ENCODE measurements at regions of chr2 and their contacts with region 1.

Region 1: GRCh38 chr2:218395797-218396687 is 3.6 kb upstream of the CTDSP1 start:
- DNase-seq: peak; percentile 88
- ATAC-seq: peak; percentile 70
- H3K4me3 Mint-ChIP-seq: peak overlapping the region; percentile 92
- H3K27ac Mint-ChIP-seq: peak overlapping the region; percentile 96
- H3K4me1 Mint-ChIP-seq: peaks cover 51% of the 10 kb centered on the region
- H3K27me3 Mint-ChIP-seq: no peaks in the 10 kb centered on the region
- CTCF ChIP-seq: peak; percentile 44

Region 2: GRCh38 chr2:217489145-217489960 is 906.7 kb before region 1 on chr2:
- CTCF ChIA-PET with region 1: no interaction called
- POLR2A ChIA-PET with region 1: no interaction called
- intact Hi-C with region 1: no loop called
- DNase-seq: no peak
- ATAC-seq: no peak
- H3K4me3 Mint-ChIP-seq: no peak overlapping the region
- H3K27ac Mint-ChIP-seq: no peak overlapping the region
- H3K4me1 Mint-ChIP-seq: no peaks in the 10 kb centered on the region
- H3K27me3 Mint-ChIP-seq: peaks cover 4% of the 10 kb centered on the region
- CTCF ChIP-seq: no peak

Region 3: DNA sequence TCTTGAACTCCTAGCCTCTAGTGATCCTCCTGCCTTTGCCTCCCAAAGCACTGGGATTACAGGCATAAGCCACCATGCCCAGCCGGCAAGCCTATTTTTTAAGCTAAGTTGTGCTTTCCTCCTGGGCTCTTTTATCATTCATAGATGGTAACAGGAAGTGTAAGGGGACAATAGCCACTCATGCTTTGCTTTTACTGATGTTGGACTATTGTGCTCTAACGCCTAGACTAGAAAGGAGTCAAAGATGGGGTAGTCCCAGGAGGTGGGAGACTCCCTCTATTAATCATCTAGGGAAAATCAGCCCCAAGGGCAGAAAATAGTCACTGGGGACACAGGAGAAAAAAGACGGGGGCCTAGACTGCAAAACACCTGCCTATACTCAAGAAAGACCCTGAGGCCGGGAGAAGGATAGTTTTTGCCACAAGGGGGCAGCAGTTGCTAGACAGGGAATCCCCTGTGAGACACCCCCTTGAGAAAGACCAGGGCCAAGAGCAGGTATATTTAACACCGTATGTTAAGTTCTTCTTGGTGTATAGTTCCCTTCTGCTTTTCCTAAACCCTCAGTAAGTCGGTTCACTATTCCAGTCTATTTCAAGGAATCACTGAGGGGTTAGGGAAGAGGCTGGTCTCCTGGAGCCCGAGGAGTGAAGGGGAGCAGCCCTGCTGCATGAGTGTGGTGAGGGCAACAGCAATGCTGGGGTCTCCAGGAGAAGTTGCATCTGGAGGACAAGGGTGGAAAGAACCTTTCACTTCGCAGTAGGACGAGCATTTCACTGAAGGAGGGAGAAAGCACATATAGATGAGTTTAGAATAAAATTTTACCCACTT is 227.2 kb before region 1 on chr2:
- CTCF ChIA-PET with region 1: no interaction called
- POLR2A ChIA-PET with region 1: no interaction called
- intact Hi-C with region 1: loop called (anchors 5 kb)
- DNase-seq: peak; percentile 41
- ATAC-seq: peak; percentile 79
- H3K4me3 Mint-ChIP-seq: no peak overlapping the region
- H3K27ac Mint-ChIP-seq: no peak overlapping the region
- H3K4me1 Mint-ChIP-seq: peaks cover 25% of the 10 kb centered on the region
- H3K27me3 Mint-ChIP-seq: peaks cover 18% of the 10 kb centered on the region
- CTCF ChIP-seq: peak; percentile 30

Region 4: GRCh38 chr2:218257390-218257981 is 138.6 kb before region 1 on chr2:
- CTCF ChIA-PET with region 1: no interaction called
- POLR2A ChIA-PET with region 1: interaction called, 4 read pairs
- intact Hi-C with region 1: loop called (anchors 1 kb)
- DNase-seq: peak; percentile 67
- ATAC-seq: peak; percentile 89
- H3K4me3 Mint-ChIP-seq: peak overlapping the region; percentile 73
- H3K27ac Mint-ChIP-seq: peak overlapping the region; percentile 92
- H3K4me1 Mint-ChIP-seq: peaks cover 70% of the 10 kb centered on the region
- H3K27me3 Mint-ChIP-seq: no peaks in the 10 kb centered on the region
- CTCF ChIP-seq: no peak

Region 5: GRCh38 chr2:218292048-218293014 is 103.7 kb before region 1 on chr2 and contains the start of gene TMBIM1:
- CTCF ChIA-PET with region 1: interaction called, 12 read pairs
- POLR2A ChIA-PET with region 1: interaction called, 16 read pairs
- intact Hi-C with region 1: loop called (anchors 1 kb)
- DNase-seq: peak; percentile 89
- ATAC-seq: peak; percentile 80
- H3K4me3 Mint-ChIP-seq: peak within 1 kb of the TSS; percentile 83
- H3K27ac Mint-ChIP-seq: peak within 1 kb of the TSS; percentile 92
- H3K4me1 Mint-ChIP-seq: peaks cover 73% of the 10 kb centered on the region
- H3K27me3 Mint-ChIP-seq: no peaks in the 10 kb centered on the region
- CTCF ChIP-seq: peak; percentile 40
- total RNA-seq, gene TMBIM1: 40.7 and 45.0 TPM in 2 replicates

Region 6: GRCh38 chr2:218360447-218360846 is 35.6 kb before region 1 on chr2:
- CTCF ChIA-PET with region 1: interaction called, 7 read pairs
- POLR2A ChIA-PET with region 1: no interaction called
- intact Hi-C with region 1: loop called (anchors 1 kb)
- DNase-seq: no peak
- ATAC-seq: no peak
- H3K4me3 Mint-ChIP-seq: no peak overlapping the region
- H3K27ac Mint-ChIP-seq: peak overlapping the region; percentile 25
- H3K4me1 Mint-ChIP-seq: peaks cover 11% of the 10 kb centered on the region
- H3K27me3 Mint-ChIP-seq: no peaks in the 10 kb centered on the region
- CTCF ChIP-seq: no peak

Region 7: DNA sequence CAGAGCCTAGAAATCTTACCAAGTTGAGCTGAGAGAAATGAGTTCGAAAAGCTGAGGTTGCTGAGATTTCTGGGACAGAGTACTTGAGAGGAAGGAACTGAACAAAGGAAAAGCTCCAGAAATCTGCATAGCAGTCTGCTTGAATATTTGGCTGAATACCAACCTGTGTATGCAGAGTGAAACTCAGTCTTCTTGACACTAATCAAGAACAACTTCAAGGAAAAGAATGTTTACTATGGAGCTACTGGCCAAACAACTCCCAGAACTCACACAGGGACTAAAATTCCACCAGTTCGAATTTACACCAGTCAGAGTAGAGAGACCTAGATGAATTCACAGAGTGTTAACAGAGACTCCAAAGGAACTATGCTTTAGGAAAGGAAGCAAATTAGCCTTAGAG is 105.6 kb after region 1 on chr2:
- CTCF ChIA-PET with region 1: no interaction called
- POLR2A ChIA-PET with region 1: no interaction called
- intact Hi-C with region 1: no loop called
- DNase-seq: no peak
- ATAC-seq: no peak
- H3K4me3 Mint-ChIP-seq: no peak overlapping the region
- H3K27ac Mint-ChIP-seq: no peak overlapping the region
- H3K4me1 Mint-ChIP-seq: peaks cover 4% of the 10 kb centered on the region
- H3K27me3 Mint-ChIP-seq: no peaks in the 10 kb centered on the region
- CTCF ChIP-seq: no peak

Region 8: GRCh38 chr2:218523651-218524050 is 127.6 kb after region 1 on chr2:
- CTCF ChIA-PET with region 1: no interaction called
- POLR2A ChIA-PET with region 1: interaction called, 13 read pairs
- intact Hi-C with region 1: no loop called
- DNase-seq: no peak
- ATAC-seq: no peak
- H3K4me3 Mint-ChIP-seq: no peak overlapping the region
- H3K27ac Mint-ChIP-seq: no peak overlapping the region
- H3K4me1 Mint-ChIP-seq: no peaks in the 10 kb centered on the region
- H3K27me3 Mint-ChIP-seq: no peaks in the 10 kb centered on the region
- CTCF ChIP-seq: no peak

Region 9: DNA sequence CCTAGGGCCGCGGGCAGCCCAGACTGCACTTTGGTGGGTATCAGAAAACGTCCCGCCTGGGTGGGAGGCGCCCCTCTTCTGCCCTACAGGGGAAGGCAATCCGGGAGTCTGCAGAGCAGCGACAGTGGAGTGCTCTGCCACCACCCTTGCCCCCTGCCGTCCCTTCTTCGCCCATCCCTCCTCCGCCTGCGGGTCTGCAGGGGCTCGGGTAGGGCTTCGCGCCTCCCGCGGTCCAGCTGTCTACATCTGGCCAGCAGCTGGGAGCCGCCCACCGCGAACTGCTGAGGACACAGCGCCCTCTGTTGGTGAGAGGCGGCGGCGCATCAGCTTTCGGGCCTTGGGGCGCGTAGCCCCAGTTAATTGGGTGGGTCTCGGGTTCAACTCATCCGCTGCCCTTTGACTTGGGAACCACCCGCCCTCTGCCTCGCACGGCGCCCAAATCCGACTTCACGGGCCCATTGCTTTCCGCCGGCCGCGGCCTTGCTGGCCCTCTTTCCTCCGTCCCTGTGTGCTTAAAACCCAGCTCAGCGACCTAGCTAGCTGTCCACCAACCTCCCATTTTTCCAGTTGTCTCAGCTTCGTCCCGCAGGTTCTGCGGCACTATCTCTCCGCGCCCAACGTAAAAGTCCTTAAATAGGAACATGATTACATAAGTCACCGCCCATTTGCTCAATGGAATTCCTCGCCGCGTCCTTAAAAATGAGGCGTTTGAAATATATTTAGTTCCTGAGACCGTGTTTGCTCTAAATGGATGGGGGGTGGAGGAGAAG is 502.3 kb after region 1 on chr2:
- CTCF ChIA-PET with region 1: interaction called, 3 read pairs
- POLR2A ChIA-PET with region 1: no interaction called
- intact Hi-C with region 1: loop called (anchors 5 kb)
- DNase-seq: peak; percentile 88
- ATAC-seq: peak; percentile 22
- H3K4me3 Mint-ChIP-seq: peak overlapping the region; percentile 85
- H3K27ac Mint-ChIP-seq: peak overlapping the region; percentile 84
- H3K4me1 Mint-ChIP-seq: peaks cover 47% of the 10 kb centered on the region
- H3K27me3 Mint-ChIP-seq: peaks cover 22% of the 10 kb centered on the region
- CTCF ChIP-seq: peak; percentile 97